GM12878 (cell line): ENCODE measurements at regions of chr11 and their contacts with region 1.

Region 1: DNA sequence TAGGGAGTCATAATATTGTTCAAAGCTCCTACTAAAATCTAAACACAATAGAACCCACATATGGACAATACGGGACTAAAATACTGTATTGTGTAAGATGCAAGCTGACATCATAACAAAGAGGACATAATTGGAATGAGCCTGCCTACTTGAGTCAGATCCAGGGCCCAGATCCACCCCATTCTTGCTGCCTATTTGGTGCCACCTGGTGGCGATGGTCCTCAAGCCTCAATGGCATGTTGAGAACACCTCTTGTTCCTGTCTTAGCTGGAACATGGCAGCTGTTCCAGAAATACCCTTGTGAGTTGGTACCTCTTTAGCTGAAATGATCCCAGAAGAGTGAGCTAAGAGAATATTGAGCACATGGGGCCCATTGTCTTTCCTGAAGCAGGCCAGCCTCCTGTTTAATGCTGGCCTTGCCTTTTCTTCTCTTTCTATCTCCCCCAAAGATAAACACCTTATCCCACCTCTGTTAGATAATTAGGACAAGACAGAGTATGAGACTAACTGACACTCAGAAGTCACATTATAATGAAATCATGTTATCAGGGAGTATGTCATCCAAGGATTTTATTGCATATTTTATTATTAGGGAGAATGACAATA is 680.9 kb upstream of the ANO5 start:
- DNase-seq: no peak
- ATAC-seq: peak; percentile 98
- H3K4me3 ChIP-seq: no peak overlapping the region
- H3K27ac ChIP-seq: no peak overlapping the region
- H3K4me1 ChIP-seq: no peaks in the 10 kb centered on the region
- H3K27me3 ChIP-seq: no peaks in the 10 kb centered on the region
- CTCF ChIP-seq: peak; percentile 54 to 75 (median 69)
- EP300 ChIP-seq: no peak
- POLR2A ChIP-seq: no peak
- RAD21 ChIP-seq: peak; percentile 54; the same call in 1 of the 2 replicates

Region 2: GRCh38 chr11:21142007-21142406 is 369.9 kb before region 1 on chr11:
- CTCF ChIA-PET with region 1: interaction called, 19 read pairs
- POLR2A ChIA-PET with region 1: no interaction called
- RAD21 ChIA-PET with region 1: interaction called, 9 read pairs
- SMC1A ChIA-PET with region 1: interaction called, 6 read pairs
- in situ Hi-C with region 1: no loop called
- intact Hi-C with region 1: loop called (anchors 5 kb)
- DNase-seq: no peak
- ATAC-seq: no peak
- H3K4me3 ChIP-seq: no peak overlapping the region
- H3K27ac ChIP-seq: no peak overlapping the region
- H3K4me1 ChIP-seq: no peaks in the 10 kb centered on the region
- H3K27me3 ChIP-seq: no peaks in the 10 kb centered on the region
- CTCF ChIP-seq: peak in 1 of 3 experiments; percentile 9; a peak in 1 of 6 replicates
- EP300 ChIP-seq: no peak
- POLR2A ChIP-seq: no peak
- RAD21 ChIP-seq: 0 out of 2 replicates have a peak, but pooled peaks have one; percentile 9

Region 3: GRCh38 chr11:21401496-21401895 is 110.4 kb before region 1 on chr11:
- CTCF ChIA-PET with region 1: interaction called, 14 read pairs
- POLR2A ChIA-PET with region 1: no interaction called
- RAD21 ChIA-PET with region 1: interaction called, 8 read pairs
- SMC1A ChIA-PET with region 1: interaction called, 9 read pairs
- in situ Hi-C with region 1: no loop called
- intact Hi-C with region 1: no loop called
- DNase-seq: no peak
- ATAC-seq: no peak
- H3K4me3 ChIP-seq: no peak overlapping the region
- H3K27ac ChIP-seq: no peak overlapping the region
- H3K4me1 ChIP-seq: no peaks in the 10 kb centered on the region
- H3K27me3 ChIP-seq: no peaks in the 10 kb centered on the region
- CTCF ChIP-seq: no peak
- EP300 ChIP-seq: no peak
- POLR2A ChIP-seq: no peak
- RAD21 ChIP-seq: no peak

Region 4: DNA sequence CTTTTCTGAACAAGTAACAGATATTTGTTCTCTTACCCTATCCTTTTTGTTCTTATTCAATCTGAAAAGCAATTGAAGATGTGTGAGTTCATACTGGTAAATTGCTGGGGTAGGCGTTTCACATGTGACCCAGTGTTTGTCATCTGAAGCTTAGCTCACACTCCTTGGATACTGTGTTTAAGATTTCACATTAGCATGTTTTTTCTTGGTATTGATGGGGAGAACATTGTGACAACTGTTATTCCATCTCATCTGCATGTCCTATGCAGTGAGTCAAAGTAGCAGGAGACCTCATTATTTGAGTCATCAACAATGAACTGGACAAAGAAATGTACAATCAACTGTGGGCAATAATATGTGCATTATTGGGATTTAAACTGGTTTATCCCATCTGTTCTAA is 10.7 kb before region 1 on chr11:
- CTCF ChIA-PET with region 1: interaction called, 22 read pairs
- POLR2A ChIA-PET with region 1: no interaction called
- RAD21 ChIA-PET with region 1: interaction called, 5 read pairs
- SMC1A ChIA-PET with region 1: interaction called, 8 read pairs
- in situ Hi-C with region 1: no loop called
- intact Hi-C with region 1: no loop called
- DNase-seq: no peak
- ATAC-seq: no peak
- H3K4me3 ChIP-seq: no peak overlapping the region
- H3K27ac ChIP-seq: no peak overlapping the region
- H3K4me1 ChIP-seq: no peaks in the 10 kb centered on the region
- H3K27me3 ChIP-seq: no peaks in the 10 kb centered on the region
- CTCF ChIP-seq: no peak
- EP300 ChIP-seq: no peak
- POLR2A ChIP-seq: no peak
- RAD21 ChIP-seq: no peak